Activated naive CD4-positive, alpha-beta T cell treated with anti-CD3 and anti-CD28 coated beads for 36 hours (primary cell): ENCODE measurements at regions of chr1 and their contacts with region 1.

Region 1: DNA sequence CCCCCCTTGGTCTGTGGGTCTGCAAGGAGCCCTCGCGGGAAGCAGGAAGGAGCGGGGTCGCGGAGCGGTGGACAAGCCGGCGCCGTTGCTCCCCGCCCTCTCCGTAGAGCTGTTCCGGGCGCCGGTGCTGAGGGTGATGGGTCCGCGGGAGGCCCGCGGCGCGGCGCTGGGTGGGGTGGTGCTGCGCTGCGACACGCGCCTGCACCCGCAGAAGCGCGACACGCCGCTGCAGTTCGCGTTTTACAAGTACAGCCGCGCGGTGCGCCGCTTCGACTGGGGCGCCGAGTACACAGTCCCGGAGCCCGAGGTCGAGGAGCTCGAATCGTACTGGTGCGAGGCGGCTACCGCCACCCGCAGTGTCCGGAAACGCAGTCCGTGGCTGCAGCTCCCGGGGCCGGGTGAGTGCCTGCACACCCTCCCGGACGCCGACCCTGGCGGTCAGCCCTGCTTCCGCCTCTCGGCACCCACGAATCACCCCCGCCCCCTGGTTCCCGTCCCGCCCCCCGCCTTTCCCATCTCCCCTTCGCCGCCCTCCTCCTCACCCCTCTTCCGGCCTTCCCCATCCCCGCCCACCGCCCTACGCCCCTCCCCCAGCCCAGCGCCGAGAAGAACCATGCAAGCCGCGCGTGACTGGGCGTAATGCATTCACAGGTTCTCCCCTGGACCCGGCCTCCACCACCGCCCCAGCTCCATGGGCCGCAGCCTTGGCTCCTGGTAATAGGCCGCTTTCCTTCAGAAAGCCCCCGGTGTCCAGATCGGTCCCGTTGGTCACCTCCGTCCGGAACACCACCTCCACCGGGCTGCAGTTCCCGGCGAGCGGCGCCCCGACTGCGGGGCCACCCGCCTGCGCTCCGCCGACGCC is 5.5 kb downstream of the FCRLB start:
- DNase-seq: peak; percentile 69
- H3K4me3 Mint-ChIP-seq: peak overlapping the region; percentile 76
- H3K27ac Mint-ChIP-seq: no peak overlapping the region
- H3K4me1 Mint-ChIP-seq: peaks cover 44% of the 10 kb centered on the region
- H3K27me3 Mint-ChIP-seq: peaks cover 6% of the 10 kb centered on the region

Region 2: GRCh38 chr1:161706482-161707347 is 20.1 kb before region 1 on chr1 and contains the start of gene FCRLA:
- CTCF ChIA-PET with region 1: no interaction called
- intact Hi-C with region 1: loop called (anchors 2 kb)
- DNase-seq: no peak
- H3K4me3 Mint-ChIP-seq: no peak within 1 kb of the TSS
- H3K27ac Mint-ChIP-seq: no peak within 1 kb of the TSS
- H3K4me1 Mint-ChIP-seq: no peaks in the 10 kb centered on the region
- H3K27me3 Mint-ChIP-seq: no peaks in the 10 kb centered on the region
- total RNA-seq, gene FCRLA: not detected

Region 3: DNA sequence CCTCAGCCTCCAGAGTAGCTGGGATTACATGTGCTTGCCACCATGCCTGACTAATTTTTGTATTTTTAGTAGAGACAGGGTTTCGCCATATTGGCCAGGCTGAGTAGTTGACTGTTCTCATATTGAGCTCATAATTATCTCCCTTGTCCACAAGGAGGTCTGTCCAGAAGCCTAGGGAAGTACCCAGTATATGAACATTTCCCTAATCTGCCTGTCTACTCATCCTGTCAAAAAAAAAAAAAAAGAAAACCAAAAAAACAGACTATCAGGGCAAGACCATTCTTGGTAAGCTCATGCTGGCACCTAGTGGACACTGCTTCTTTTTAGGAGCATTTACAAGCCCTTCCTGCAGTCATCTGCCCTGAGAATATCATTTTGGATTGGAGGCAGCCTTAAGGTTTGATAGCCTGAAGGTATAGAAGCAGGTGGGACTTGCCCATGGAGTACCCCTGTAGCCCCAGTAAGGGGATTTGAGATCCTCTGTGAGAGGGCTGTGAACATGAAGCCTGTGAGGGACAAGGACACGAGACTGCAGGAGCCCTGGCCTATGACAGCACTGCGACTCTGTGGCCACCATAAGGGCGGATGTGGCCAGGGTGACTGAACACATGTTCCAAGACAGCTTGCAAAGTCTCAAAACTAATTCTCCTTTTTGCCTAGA is 11.9 kb after region 1 on chr1:
- CTCF ChIA-PET with region 1: interaction called, 76 read pairs
- intact Hi-C with region 1: loop called (anchors 2 kb)
- DNase-seq: peak; percentile 67
- H3K4me3 Mint-ChIP-seq: no peak overlapping the region
- H3K27ac Mint-ChIP-seq: no peak overlapping the region
- H3K4me1 Mint-ChIP-seq: peaks cover 19% of the 10 kb centered on the region
- H3K27me3 Mint-ChIP-seq: no peaks in the 10 kb centered on the region